Activated CD4-positive, alpha-beta T cell treated with anti-CD3 and anti-CD28 coated beads, Interleukin-2, amount 10 ng/mL, durations not matched to agents 24 days and 14 days (primary cell): ENCODE measurements at regions of chr12 and their contacts with region 1.

Region 1: GRCh38 chr12:120580787-120581723 is at the start of gene POP5:
- DNase-seq: peak; percentile 99
- H3K4me3 Mint-ChIP-seq: peak within 1 kb of the TSS; percentile 96
- H3K27ac Mint-ChIP-seq: peak within 1 kb of the TSS; percentile 85
- H3K4me1 Mint-ChIP-seq: peaks cover 31% of the 10 kb centered on the region
- H3K27me3 Mint-ChIP-seq: peaks cover 19% of the 10 kb centered on the region
- total RNA-seq, gene POP5: 74.0 and 76.0 TPM in 2 replicates

Region 2: DNA sequence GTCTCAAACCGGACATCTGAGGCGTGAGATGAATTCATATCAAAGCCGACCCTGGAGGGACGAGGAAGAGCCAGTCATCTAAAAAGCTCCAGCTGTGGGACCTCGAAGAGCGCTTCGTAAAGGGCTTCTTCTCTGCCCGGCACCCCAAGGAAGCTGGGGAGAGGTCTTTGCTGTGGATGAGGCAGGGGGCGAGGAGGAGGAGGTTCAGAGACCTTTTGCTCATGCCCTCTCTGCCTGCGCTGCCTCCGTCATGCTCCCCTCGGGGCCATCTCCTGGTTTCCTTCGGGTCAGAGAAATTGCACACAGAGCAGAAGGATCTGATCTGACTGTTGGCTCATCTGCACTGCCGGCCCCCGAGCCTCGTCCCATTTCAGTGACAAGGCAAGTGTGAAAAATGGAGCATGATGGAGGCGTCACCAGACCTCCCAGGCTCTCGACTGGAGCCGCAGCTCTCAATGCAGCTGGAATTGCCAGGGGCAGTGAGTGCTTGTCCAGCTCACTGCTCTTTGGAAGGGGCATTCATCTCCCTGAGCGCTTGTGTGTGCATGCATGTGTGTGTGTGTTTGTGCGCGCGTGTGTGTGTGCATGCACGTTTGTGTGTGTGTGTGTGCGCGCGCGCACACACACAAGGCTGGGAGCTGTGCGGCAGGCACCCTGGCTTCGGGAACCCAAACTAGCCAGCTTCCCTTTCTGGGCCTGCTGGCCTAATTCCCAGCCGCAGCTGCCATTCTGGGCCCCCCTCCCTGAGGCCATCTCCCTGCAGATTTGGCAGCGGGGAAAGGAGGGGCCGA is 68.6 kb after region 1 on chr12:
- intact Hi-C with region 1: loop called (anchors 1 kb)
- DNase-seq: no peak
- H3K4me3 Mint-ChIP-seq: peak overlapping the region; percentile 62
- H3K27ac Mint-ChIP-seq: no peak overlapping the region
- H3K4me1 Mint-ChIP-seq: peaks cover 12% of the 10 kb centered on the region
- H3K27me3 Mint-ChIP-seq: peaks cover 53% of the 10 kb centered on the region

Region 3: DNA sequence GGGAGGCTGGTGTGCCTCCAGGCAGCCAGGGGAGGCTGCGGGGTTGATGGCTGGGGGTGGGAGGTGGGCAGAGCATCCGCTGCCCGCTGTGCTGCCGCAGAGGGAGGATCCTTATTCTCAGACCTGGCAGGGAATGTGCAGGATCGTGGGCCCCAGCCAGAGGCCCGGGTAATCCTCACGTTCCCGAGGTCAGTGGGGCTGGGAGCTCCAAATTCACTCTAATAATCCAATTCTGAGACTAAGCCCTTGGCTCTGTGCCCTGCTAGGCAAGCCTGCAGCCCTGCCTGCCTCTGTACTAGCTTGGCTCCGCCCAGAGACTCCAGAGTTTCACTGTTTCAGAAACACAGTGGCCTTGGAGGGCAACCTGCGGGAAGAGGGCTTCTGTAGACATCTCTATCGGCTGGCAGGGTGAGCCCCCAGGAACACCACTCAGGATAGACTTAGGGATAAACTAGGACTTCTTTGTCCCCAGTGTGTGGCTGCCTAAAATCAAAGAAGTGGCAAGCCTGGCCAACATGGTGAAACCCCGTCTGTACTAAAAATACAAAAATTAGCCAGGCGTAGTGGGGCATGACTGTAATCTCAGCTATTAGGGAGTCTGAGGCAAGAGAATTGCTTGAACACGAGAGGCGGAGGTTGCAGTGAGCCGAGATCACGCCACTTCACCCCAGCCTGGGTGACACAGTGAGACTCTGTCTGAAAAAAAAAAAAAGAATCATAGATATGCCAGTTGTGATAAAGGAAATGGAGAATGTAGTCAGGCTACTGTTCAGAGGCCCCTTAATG is 88.2 kb after region 1 on chr12:
- intact Hi-C with region 1: no loop called
- DNase-seq: no peak
- H3K4me3 Mint-ChIP-seq: no peak overlapping the region
- H3K27ac Mint-ChIP-seq: no peak overlapping the region
- H3K4me1 Mint-ChIP-seq: no peaks in the 10 kb centered on the region
- H3K27me3 Mint-ChIP-seq: peaks cover 2% of the 10 kb centered on the region

Region 4: GRCh38 chr12:120710031-120710804 is 129.2 kb after region 1 on chr12 and contains the start of gene UNC119B:
- intact Hi-C with region 1: loop called (anchors 1 kb)
- DNase-seq: peak; percentile 94
- H3K4me3 Mint-ChIP-seq: peak within 1 kb of the TSS; percentile 84
- H3K27ac Mint-ChIP-seq: peak within 1 kb of the TSS; percentile 76
- H3K4me1 Mint-ChIP-seq: peaks cover 23% of the 10 kb centered on the region
- H3K27me3 Mint-ChIP-seq: no peaks in the 10 kb centered on the region
- total RNA-seq, gene UNC119B: 25.5 and 26.2 TPM in 2 replicates

Region 5: GRCh38 chr12:120971299-120972179 is 390.5 kb after region 1 on chr12:
- intact Hi-C with region 1: loop called (anchors 1 kb)
- DNase-seq: peak; percentile 84
- H3K4me3 Mint-ChIP-seq: no peak overlapping the region
- H3K27ac Mint-ChIP-seq: no peak overlapping the region
- H3K4me1 Mint-ChIP-seq: peaks cover 5% of the 10 kb centered on the region
- H3K27me3 Mint-ChIP-seq: no peaks in the 10 kb centered on the region

Region 6: DNA sequence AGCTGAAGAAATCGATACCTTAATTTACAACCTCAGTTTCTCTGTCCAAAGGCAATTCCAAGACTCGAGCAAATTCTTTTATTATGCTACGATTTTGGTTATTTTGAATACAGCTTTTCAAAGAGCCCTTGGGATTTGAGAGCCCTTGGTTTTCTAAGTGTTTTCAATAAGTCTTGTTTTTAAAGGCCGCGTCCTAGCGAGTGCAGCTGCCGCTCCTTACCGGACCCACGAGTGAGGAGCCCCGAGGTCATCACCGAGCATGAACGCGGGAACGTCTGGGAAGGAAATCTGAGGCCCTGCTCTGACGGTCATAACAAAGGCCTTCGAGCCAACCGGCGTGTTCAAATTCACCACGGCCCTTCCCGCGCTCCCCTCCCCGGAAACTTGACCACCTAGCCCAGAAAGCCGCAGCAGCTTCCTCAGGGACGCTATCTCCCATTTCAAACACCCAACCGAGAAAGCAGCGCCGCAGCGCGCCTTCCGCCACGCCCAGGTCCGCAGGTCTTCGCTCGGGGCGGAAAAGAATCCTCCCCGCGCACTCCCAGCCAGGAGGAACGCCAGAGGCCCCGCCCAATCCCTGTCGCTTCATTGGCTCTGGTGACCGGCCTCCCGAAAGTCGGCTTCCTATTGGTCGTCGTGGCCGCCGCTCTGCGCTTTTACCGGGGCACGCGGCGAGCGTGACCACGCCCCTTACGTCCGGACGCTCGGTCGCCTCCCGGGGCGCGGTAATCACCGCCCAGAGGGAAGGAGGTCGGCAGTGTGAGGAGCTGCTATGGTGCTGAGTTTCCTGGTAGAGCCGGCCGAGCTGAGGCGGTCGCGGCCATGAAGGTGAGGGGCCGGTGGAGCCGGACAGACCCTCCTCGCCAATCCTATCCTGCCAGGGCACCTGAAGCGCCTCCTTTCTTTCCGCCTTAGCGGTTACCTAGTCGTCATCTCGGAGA is 818.6 kb after region 1 on chr12 and contains the start of gene RNF34:
- intact Hi-C with region 1: loop called (anchors 5 kb)
- DNase-seq: peak; percentile 99
- H3K4me3 Mint-ChIP-seq: peak within 1 kb of the TSS; percentile 95
- H3K27ac Mint-ChIP-seq: peak within 1 kb of the TSS; percentile 98
- H3K4me1 Mint-ChIP-seq: peaks cover 24% of the 10 kb centered on the region
- H3K27me3 Mint-ChIP-seq: no peaks in the 10 kb centered on the region
- total RNA-seq, gene RNF34: 79.5 and 84.1 TPM in 2 replicates